ENCODE measurements at regions of chr5 and their contacts with region 1.

Region 1: GRCh38 chr5:95646554-95647431 is at the start of gene RFESD:
- DNase-seq: peak; percentile 98
- H3K4me3 Mint-ChIP-seq: peak within 1 kb of the TSS; percentile 77
- H3K27ac Mint-ChIP-seq: peak within 1 kb of the TSS; percentile 95
- H3K4me1 Mint-ChIP-seq: peaks cover 45% of the 10 kb centered on the region
- H3K27me3 Mint-ChIP-seq: no peaks in the 10 kb centered on the region

Region 2: DNA sequence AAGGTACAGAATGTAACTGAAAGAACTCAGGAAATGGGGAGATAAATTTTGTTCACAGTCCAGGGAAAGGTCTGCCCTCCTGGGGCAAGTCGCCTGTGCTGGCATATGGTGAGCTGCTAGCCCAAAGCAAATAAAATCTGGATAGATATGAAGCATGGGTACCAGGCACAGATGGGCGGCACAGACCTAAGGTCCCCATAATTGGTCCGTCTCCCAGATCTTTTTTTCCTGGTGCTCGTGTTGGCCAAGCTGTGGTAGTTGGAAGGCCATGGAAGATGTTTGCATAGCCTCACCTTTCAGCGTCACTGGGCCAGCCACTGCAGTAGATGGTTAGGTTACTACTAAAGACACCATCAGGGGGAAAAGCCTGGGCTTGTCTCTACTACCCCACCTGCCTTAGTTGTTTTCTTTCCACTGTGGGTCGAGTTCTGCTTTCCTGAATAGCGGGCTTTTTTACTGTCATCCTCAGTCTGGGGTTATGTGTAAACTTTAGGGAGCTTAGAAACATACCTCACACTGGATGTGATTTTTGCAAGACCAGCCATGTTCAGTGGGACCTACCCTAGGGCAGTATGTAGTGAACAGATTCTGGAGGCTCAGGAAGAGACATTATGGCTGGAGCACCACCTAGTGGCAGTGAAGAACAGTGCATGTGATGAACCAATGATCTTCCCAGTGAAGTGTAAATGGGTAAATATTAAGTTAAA is 199.9 kb after region 1 on chr5:
- CTCF ChIA-PET with region 1: interaction called, 36 read pairs
- DNase-seq: peak; percentile 76
- H3K4me3 Mint-ChIP-seq: no peak overlapping the region
- H3K27ac Mint-ChIP-seq: no peak overlapping the region
- H3K4me1 Mint-ChIP-seq: peaks cover 21% of the 10 kb centered on the region
- H3K27me3 Mint-ChIP-seq: peaks cover 15% of the 10 kb centered on the region

Region 3: DNA sequence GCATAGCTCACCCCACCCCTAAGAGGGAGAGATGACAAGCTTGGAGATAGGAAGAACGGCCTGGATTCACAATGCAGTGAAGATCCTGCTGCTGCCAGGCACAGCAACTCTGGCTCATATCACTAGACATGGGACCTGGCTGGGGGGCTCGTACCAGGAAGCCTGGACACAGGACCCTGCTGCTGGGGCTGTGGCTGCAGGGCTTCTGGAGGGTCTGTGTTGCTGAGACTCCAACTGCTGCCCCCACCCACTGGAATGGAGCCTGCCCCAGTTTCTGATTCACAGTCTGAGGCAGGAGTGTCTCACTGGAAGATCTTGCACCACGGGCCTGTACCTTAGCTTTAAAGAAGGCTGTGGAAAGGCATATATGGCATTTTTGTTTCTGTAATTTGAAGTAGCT is 206.7 kb after region 1 on chr5:
- CTCF ChIA-PET with region 1: interaction called, 36 read pairs
- DNase-seq: no peak
- H3K4me3 Mint-ChIP-seq: no peak overlapping the region
- H3K27ac Mint-ChIP-seq: no peak overlapping the region
- H3K4me1 Mint-ChIP-seq: peaks cover 5% of the 10 kb centered on the region
- H3K27me3 Mint-ChIP-seq: no peaks in the 10 kb centered on the region

Region 4: GRCh38 chr5:95961617-95962474 is 315.1 kb after region 1 on chr5 and contains the start of gene ELL2:
- CTCF ChIA-PET with region 1: no interaction called
- DNase-seq: peak; percentile 97
- H3K4me3 Mint-ChIP-seq: peak within 1 kb of the TSS; percentile 95
- H3K27ac Mint-ChIP-seq: peak within 1 kb of the TSS; percentile 89
- H3K4me1 Mint-ChIP-seq: peaks cover 31% of the 10 kb centered on the region
- H3K27me3 Mint-ChIP-seq: peaks cover 24% of the 10 kb centered on the region

Measured in activated naive CD4-positive, alpha-beta T cell treated with anti-CD3 and anti-CD28 coated beads, Interleukin-2, amount 10 ng/mL, durations not matched to agents 7 days and 5 days (primary cell).